ENCODE measurements at regions of chr5 and their contacts with region 1.

Region 1: DNA sequence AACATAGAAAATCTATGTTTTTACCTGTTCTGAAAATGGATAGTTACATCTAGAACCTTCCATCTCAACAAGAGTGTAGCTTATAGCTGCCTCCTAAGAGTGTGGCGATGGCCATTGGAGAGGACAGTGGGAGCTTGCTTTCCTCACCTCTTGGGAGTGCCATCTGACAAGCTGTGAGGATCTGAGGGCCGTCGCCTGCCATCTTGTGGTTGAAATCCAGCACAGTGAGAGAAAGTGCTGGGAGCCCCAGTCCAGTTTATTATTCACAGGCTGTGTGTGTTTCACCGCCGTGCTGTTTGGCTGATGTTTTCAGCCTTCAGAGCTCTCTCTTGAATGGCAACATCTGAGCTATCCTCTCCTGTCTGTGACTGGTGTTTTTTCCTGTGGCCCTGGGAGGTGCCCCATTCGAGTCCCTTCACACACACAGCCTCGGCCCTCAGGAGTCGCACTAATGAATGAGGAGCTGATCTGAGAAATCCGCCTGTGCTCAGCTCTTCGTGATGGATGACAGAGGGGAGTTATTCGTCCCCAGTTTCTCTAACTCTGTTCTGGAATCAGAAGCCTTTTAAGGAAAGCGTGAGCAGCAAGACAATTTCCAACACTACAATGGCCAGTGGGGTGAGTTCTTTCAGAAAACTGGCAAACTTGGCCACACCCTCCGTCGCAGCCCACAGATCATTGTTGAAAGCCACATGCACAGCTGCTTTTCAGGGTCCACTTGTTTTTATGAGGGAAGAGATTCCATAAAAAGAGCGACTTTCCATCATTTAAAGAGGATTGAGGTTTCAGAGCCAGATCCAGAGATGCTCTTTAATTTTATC is 170.3 kb downstream of the PDZD2 start:
- DNase-seq: peak; percentile 83
- H3K4me3 ChIP-seq: no peak overlapping the region
- H3K27ac ChIP-seq: no peak overlapping the region
- H3K4me1 ChIP-seq: no peaks in the 10 kb centered on the region
- H3K27me3 ChIP-seq: peaks cover 12% of the 10 kb centered on the region
- CTCF ChIP-seq: peak; percentile 85

Region 2: GRCh38 chr5:31581498-31582099 is 227.7 kb before region 1 on chr5:
- CTCF ChIA-PET with region 1: interaction called, 3 read pairs
- POLR2A ChIA-PET with region 1: no interaction called
- intact Hi-C with region 1: loop called (anchors 2 kb)
- DNase-seq: peak; percentile 63
- H3K4me3 ChIP-seq: no peak overlapping the region
- H3K27ac ChIP-seq: no peak overlapping the region
- H3K4me1 ChIP-seq: no peaks in the 10 kb centered on the region
- H3K27me3 ChIP-seq: no peaks in the 10 kb centered on the region
- CTCF ChIP-seq: peak; percentile 65

Region 3: DNA sequence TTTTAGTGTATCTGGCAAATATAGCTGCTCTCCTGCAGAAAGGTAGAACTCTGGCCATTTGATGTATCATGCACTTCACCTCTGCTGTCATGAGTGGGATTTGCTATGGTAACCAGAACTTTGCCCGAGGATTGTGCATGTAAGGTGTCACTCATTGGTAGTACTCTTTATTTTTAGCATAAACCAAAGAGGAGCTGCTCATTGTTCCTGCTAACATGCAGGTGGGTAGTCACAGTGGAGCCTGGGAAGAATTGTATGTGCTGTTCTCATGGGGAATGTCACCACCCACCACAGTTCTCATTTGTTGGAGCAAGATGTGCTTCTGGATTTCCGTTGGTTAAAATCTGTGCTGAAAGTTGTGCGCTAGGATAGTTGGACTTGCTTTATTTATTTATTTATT is 158.0 kb before region 1 on chr5:
- CTCF ChIA-PET with region 1: no interaction called
- POLR2A ChIA-PET with region 1: no interaction called
- intact Hi-C with region 1: loop called (anchors 5 kb)
- DNase-seq: no peak
- H3K4me3 ChIP-seq: no peak overlapping the region
- H3K27ac ChIP-seq: no peak overlapping the region
- H3K4me1 ChIP-seq: no peaks in the 10 kb centered on the region
- H3K27me3 ChIP-seq: peaks cover 4% of the 10 kb centered on the region
- CTCF ChIP-seq: no peak

Region 4: GRCh38 chr5:32109236-32109635 is 300.0 kb after region 1 on chr5:
- CTCF ChIA-PET with region 1: no interaction called
- POLR2A ChIA-PET with region 1: no interaction called
- intact Hi-C with region 1: no loop called
- DNase-seq: no peak
- H3K4me3 ChIP-seq: no peak overlapping the region
- H3K27ac ChIP-seq: no peak overlapping the region
- H3K4me1 ChIP-seq: no peaks in the 10 kb centered on the region
- H3K27me3 ChIP-seq: no peaks in the 10 kb centered on the region
- CTCF ChIP-seq: no peak

Measured in A673 (cell line).